Spleen (tissue), 13 donors: ENCODE measurements at regions of chr15 and their contacts with region 1.

Region 1: DNA sequence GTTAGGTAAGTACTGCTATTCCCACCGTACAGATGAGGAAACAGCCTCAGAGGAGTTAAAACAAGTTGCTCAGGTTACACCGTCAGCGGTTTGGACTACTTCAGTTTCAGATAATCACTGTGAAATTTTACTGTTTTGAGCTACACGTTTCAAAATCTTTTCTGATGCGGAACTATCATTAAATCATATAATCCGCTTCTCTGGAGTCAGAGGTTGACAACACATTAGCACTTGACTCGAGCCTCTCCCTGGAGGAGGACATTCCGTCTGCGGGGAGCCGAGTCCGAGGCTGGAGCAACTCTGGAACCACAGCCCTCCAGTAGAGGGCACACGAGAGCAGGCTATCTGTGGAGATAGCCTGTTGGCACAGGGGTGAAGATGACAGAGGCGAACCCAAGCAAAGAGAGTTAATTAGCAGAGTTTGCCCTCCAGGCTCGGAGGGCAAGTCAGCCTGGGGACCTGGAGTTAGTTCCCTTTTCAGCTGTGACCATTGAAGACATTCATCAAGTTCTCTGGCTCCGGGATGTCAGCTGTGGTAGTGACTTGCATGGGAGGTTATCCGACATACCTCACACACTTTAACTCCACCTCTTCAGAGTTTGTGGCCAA is 131.2 kb downstream of the IGF1R start:
- DNase-seq: peak; percentile 89
- H3K4me3 ChIP-seq: peak overlapping the region in 1 of 8 donors; percentile 28
- H3K27ac ChIP-seq: peak overlapping the region in 5 of 8 donors; percentile 2 to 50 (median 32)
- H3K4me1 ChIP-seq: peaks cover 20 to 66% (median 45%) of the 10 kb centered on the region in 6 donors
- H3K27me3 ChIP-seq: no peaks in the 10 kb centered on the region
- CTCF ChIP-seq: peak; percentile 69 to 94 (median 88)
- POLR2A ChIP-seq: no peak

Region 2: GRCh38 chr15:98647774-98648653 is 131.6 kb before region 1 on chr15 and contains the start of gene IGF1R:
- intact Hi-C with region 1: loop called (anchors 10 kb)
- DNase-seq: peak; percentile 97
- H3K4me3 ChIP-seq: peak within 1 kb of the TSS; percentile 72 to 96 (median 90)
- H3K27ac ChIP-seq: peak within 1 kb of the TSS; percentile 74 to 93 (median 92)
- H3K4me1 ChIP-seq: peaks cover 6 to 49% (median 26%) of the 10 kb centered on the region in 6 donors
- H3K27me3 ChIP-seq: peaks cover 0 to 51% (median 15%) of the 10 kb centered on the region in 7 donors
- CTCF ChIP-seq: peak in 8 of 11 experiments; percentile 8 to 56 (median 49)
- POLR2A ChIP-seq: no peak
- total RNA-seq, gene IGF1R: 43.9 to 104 (median 53.8) TPM

Region 3: GRCh38 chr15:99076552-99077308 is 297.2 kb after region 1 on chr15:
- intact Hi-C with region 1: loop called (anchors 10 kb)
- DNase-seq: no peak
- H3K4me3 ChIP-seq: peak overlapping the region in 6 of 8 donors; percentile 19 to 62 (median 28)
- H3K27ac ChIP-seq: peak overlapping the region in 3 of 8 donors; percentile 11 to 53 (median 22)
- H3K4me1 ChIP-seq: peaks cover 0 to 9% (median 8%) of the 10 kb centered on the region in 6 donors
- H3K27me3 ChIP-seq: peaks cover 0 to 10% (median 0%) of the 10 kb centered on the region in 7 donors
- CTCF ChIP-seq: peak; percentile 62 to 90 (median 86)
- POLR2A ChIP-seq: no peak